Caco-2 (cell line): ENCODE measurements at regions of chr3 and their contacts with region 1.

Region 1: GRCh38 chr3:158109804-158110657 is at the start of gene RSRC1:
- DNase-seq: peak; percentile 88
- H3K4me3 ChIP-seq: peak within 1 kb of the TSS; percentile 63
- H3K4me3 Mint-ChIP-seq: peak within 1 kb of the TSS; percentile 95
- H3K27ac Mint-ChIP-seq: peak within 1 kb of the TSS; percentile 83
- H3K4me1 ChIP-seq: peaks cover 10% of the 10 kb centered on the region; the same call in 1 of the 2 replicates
- H3K4me1 Mint-ChIP-seq: peaks cover 7% of the 10 kb centered on the region
- H3K27me3 ChIP-seq: no peaks in the 10 kb centered on the region; the same call in none of the 2 replicates
- H3K27me3 Mint-ChIP-seq: peaks cover 8% of the 10 kb centered on the region
- CTCF ChIP-seq: no peak
- total RNA-seq, gene RSRC1: 34.6 and 38.4 TPM in 2 replicates

Region 2: GRCh38 chr3:157618075-157618760 is 491.8 kb before region 1 on chr3:
- CTCF ChIA-PET with region 1: no interaction called
- POLR2A ChIA-PET with region 1: interaction called, 8 read pairs
- intact Hi-C with region 1: loop called (anchors 10 kb)
- DNase-seq: peak in 1 of 2 experiments; percentile 15
- H3K4me3 ChIP-seq: no peak overlapping the region
- H3K4me3 Mint-ChIP-seq: no peak overlapping the region
- H3K27ac Mint-ChIP-seq: no peak overlapping the region
- H3K4me1 ChIP-seq: no peaks in the 10 kb centered on the region
- H3K4me1 Mint-ChIP-seq: peaks cover 7% of the 10 kb centered on the region
- H3K27me3 ChIP-seq: no peaks in the 10 kb centered on the region; the same call in 1 of the 2 replicates
- H3K27me3 Mint-ChIP-seq: peaks cover 12% of the 10 kb centered on the region
- CTCF ChIP-seq: peak in 1 of 2 experiments; percentile 57

Region 3: DNA sequence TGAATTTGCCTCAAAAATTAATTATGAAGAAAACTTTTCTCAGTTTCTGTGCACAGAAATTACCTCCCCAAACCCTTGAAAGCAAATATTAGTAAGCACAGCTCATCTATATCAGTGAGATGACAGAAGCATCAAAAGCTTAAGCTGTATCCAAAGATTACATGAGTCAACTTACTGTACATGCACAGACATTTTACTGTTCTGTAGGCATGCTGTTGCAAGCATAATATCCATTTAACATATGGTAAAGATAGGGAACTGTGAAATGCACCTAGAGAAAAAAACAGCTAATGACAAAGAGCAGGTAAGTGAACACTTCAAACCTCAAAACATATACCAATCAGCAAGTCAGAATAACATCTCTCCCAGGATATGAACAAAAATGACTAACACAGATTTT is 24.7 kb before region 1 on chr3:
- CTCF ChIA-PET with region 1: interaction called, 4 read pairs
- POLR2A ChIA-PET with region 1: interaction called, 13 read pairs
- intact Hi-C with region 1: no loop called
- DNase-seq: no peak
- H3K4me3 ChIP-seq: no peak overlapping the region
- H3K4me3 Mint-ChIP-seq: no peak overlapping the region
- H3K27ac Mint-ChIP-seq: no peak overlapping the region
- H3K4me1 ChIP-seq: no peaks in the 10 kb centered on the region
- H3K4me1 Mint-ChIP-seq: no peaks in the 10 kb centered on the region
- H3K27me3 ChIP-seq: no peaks in the 10 kb centered on the region
- H3K27me3 Mint-ChIP-seq: peaks cover 6% of the 10 kb centered on the region
- CTCF ChIP-seq: no peak

Region 4: DNA sequence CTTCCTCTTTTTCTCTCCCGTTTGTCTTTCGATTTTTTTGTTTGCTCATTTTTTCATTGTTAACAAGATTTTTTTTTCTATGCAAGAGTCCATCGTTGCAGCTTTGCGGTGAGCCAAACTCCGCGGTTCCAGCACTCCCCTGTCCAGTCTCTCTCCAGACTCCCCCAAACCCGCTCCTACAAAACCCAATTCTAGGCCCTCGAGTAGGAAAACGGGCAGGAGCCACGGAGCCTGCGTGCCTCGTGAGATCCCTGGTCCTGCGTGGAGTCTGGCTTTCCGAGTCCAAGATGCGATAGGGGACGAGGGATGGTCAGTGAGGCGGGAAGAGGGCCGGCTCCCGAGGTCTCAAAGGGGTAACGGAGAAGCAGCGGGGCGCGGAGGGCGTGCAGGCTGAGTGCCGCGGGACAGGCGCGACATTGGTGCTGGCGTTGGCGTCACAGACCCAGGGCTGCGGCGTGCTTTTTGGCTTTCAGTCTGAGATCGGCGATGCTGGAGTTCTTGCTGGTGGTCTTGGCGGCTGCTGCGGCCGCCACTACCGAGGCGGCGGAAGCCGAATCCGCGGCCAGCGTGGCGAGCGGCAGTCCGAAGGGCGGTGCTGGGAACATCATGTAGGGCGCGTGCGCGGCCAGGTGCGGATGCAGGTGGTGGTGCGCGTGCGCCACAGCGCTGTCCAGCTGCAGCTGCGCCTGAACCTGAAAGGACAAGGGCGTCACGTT is 12.3 kb before region 1 on chr3:
- CTCF ChIA-PET with region 1: no interaction called
- POLR2A ChIA-PET with region 1: interaction called, 22 read pairs
- intact Hi-C with region 1: loop called (anchors 1 kb)
- DNase-seq: peak; percentile 88 to 91
- H3K4me3 ChIP-seq: peak overlapping the region; percentile 74
- H3K4me3 Mint-ChIP-seq: peak overlapping the region; percentile 75
- H3K27ac Mint-ChIP-seq: peak overlapping the region; percentile 46
- H3K4me1 ChIP-seq: no peaks in the 10 kb centered on the region
- H3K4me1 Mint-ChIP-seq: peaks cover 10% of the 10 kb centered on the region
- H3K27me3 ChIP-seq: no peaks in the 10 kb centered on the region
- H3K27me3 Mint-ChIP-seq: peaks cover 3% of the 10 kb centered on the region
- CTCF ChIP-seq: no peak

Region 5: DNA sequence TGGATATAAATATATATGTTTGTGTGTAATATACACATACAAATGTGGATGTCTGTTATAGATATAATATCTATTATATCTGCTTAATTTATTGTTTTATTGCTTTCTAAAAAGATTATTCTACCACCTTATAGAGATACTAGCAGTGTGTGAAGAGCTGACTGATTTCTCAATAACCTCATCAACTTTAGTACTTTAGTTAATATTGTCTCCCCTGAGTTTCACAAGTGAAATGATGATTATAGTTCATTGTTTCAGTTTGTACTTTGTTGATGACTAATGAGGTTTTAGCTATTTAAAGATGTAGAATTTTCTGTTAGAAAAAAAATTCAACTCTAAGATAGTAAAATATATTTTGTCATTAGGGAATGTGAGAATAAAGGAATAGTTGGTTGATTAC is 11.3 kb after region 1 on chr3:
- CTCF ChIA-PET with region 1: no interaction called
- POLR2A ChIA-PET with region 1: interaction called, 15 read pairs
- intact Hi-C with region 1: no loop called
- DNase-seq: no peak
- H3K4me3 ChIP-seq: no peak overlapping the region
- H3K4me3 Mint-ChIP-seq: no peak overlapping the region
- H3K27ac Mint-ChIP-seq: no peak overlapping the region
- H3K4me1 ChIP-seq: no peaks in the 10 kb centered on the region
- H3K4me1 Mint-ChIP-seq: no peaks in the 10 kb centered on the region
- H3K27me3 ChIP-seq: no peaks in the 10 kb centered on the region
- H3K27me3 Mint-ChIP-seq: no peaks in the 10 kb centered on the region
- CTCF ChIP-seq: no peak

Region 6: GRCh38 chr3:158221426-158221825 is 111.4 kb after region 1 on chr3:
- CTCF ChIA-PET with region 1: no interaction called
- POLR2A ChIA-PET with region 1: no interaction called
- intact Hi-C with region 1: loop called (anchors 5 kb)
- DNase-seq: no peak
- H3K4me3 ChIP-seq: no peak overlapping the region
- H3K4me3 Mint-ChIP-seq: no peak overlapping the region
- H3K27ac Mint-ChIP-seq: no peak overlapping the region
- H3K4me1 ChIP-seq: peaks cover 22% of the 10 kb centered on the region
- H3K4me1 Mint-ChIP-seq: peaks cover 12% of the 10 kb centered on the region
- H3K27me3 ChIP-seq: no peaks in the 10 kb centered on the region
- H3K27me3 Mint-ChIP-seq: no peaks in the 10 kb centered on the region
- CTCF ChIP-seq: no peak

Region 7: DNA sequence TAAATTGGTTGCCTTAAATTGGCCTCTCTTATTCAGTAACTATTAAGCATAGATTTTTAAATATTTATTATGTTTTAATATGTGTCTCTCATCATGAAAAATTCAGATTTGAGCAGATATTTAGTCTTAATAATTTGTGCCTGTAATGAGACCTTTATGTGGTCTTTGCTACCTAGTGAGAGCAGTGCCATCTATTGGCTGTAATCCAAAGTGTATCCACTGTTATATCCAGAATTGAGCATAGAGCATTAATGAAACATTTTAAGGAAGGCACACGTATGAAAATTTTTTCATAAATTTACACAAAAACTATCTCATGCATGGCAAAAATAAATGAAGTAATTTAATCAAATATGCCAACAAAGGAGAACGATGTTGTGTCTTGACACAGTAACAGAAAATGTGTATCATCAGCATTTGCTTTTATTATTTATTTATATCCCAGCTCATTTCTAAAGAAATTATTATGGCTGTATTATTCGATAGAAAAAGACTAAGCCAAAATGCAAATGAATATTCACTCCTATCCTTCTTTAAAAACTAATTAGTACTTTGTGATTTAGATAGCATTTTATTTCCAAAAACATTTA is 203.4 kb after region 1 on chr3:
- CTCF ChIA-PET with region 1: interaction called, 3 read pairs
- POLR2A ChIA-PET with region 1: interaction called, 3 read pairs
- intact Hi-C with region 1: loop called (anchors 2 kb)
- DNase-seq: peak in 1 of 2 experiments; percentile 22
- H3K4me3 ChIP-seq: no peak overlapping the region
- H3K4me3 Mint-ChIP-seq: no peak overlapping the region
- H3K27ac Mint-ChIP-seq: no peak overlapping the region
- H3K4me1 ChIP-seq: peaks cover 14% of the 10 kb centered on the region
- H3K4me1 Mint-ChIP-seq: peaks cover 11% of the 10 kb centered on the region
- H3K27me3 ChIP-seq: no peaks in the 10 kb centered on the region
- H3K27me3 Mint-ChIP-seq: no peaks in the 10 kb centered on the region
- CTCF ChIP-seq: peak; percentile 47 to 61

Region 8: GRCh38 chr3:158532099-158532734 is 422.2 kb after region 1 on chr3:
- CTCF ChIA-PET with region 1: no interaction called
- POLR2A ChIA-PET with region 1: no interaction called
- intact Hi-C with region 1: no loop called
- DNase-seq: peak in 1 of 2 experiments; percentile 9
- H3K4me3 ChIP-seq: no peak overlapping the region
- H3K4me3 Mint-ChIP-seq: no peak overlapping the region
- H3K27ac Mint-ChIP-seq: no peak overlapping the region
- H3K4me1 ChIP-seq: no peaks in the 10 kb centered on the region
- H3K4me1 Mint-ChIP-seq: no peaks in the 10 kb centered on the region
- H3K27me3 ChIP-seq: no peaks in the 10 kb centered on the region
- H3K27me3 Mint-ChIP-seq: no peaks in the 10 kb centered on the region
- CTCF ChIP-seq: peak in 1 of 2 experiments; percentile 44

Region 9: DNA sequence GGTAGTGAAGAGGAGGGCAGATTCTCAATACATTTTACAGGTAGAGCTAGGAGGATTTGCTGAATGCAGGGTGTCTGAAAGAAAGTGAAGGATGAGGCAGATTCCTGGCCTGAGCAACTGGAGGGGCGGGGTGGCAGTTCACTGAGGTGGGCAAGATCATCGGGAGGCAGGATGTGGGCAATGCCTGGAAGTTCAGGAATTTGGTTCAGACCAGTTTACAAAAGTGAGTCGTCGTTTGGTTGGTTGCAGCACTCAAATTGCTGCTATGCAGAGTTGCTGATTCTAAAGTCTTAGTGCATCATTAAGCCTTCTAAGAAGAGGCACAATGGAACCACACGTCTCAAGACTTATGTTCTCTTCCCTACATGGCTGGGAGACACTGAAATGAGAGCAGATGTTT is 825.8 kb after region 1 on chr3:
- CTCF ChIA-PET with region 1: no interaction called
- POLR2A ChIA-PET with region 1: no interaction called
- intact Hi-C with region 1: no loop called
- DNase-seq: no peak
- H3K4me3 ChIP-seq: no peak overlapping the region
- H3K4me3 Mint-ChIP-seq: no peak overlapping the region
- H3K27ac Mint-ChIP-seq: no peak overlapping the region
- H3K4me1 ChIP-seq: no peaks in the 10 kb centered on the region
- H3K4me1 Mint-ChIP-seq: no peaks in the 10 kb centered on the region
- H3K27me3 ChIP-seq: no peaks in the 10 kb centered on the region
- H3K27me3 Mint-ChIP-seq: peaks cover 7% of the 10 kb centered on the region
- CTCF ChIP-seq: no peak